Activated CD4-positive, alpha-beta T cell treated with anti-CD3 and anti-CD28 coated beads for 36 hours (primary cell): ENCODE measurements at regions of chr3 and their contacts with region 1.

Region 1: GRCh38 chr3:47865192-47865591 is 62.3 kb downstream of the DHX30 start:
- DNase-seq: no peak
- ATAC-seq: no peak
- H3K4me3 Mint-ChIP-seq: no peak overlapping the region
- H3K27ac Mint-ChIP-seq: no peak overlapping the region
- H3K4me1 Mint-ChIP-seq: no peaks in the 10 kb centered on the region
- H3K27me3 Mint-ChIP-seq: no peaks in the 10 kb centered on the region

Region 2: DNA sequence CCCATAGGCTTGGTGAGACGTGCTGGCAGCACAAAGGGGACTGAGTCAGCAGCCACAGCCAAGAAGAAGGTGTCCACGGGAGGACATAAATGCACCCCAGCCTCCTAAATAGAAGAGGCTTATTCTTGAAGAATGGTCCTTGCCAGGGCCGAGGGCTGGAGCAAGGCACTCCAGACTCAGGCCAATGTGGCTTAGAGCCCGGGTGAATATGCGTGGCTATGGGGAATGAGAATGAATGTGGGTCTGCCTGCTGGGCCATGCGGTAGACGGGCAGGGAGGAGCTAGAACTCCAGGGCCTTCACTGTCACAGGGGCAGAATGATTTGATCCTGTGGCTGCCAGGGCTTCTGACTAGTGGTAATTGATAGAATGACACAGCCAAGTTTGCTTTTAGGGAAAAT is 28.2 kb before region 1 on chr3:
- CTCF ChIA-PET with region 1: interaction called, 3 read pairs
- POLR2A ChIA-PET with region 1: interaction called, 11 read pairs
- intact Hi-C with region 1: no loop called
- DNase-seq: no peak
- ATAC-seq: no peak
- H3K4me3 Mint-ChIP-seq: no peak overlapping the region
- H3K27ac Mint-ChIP-seq: no peak overlapping the region
- H3K4me1 Mint-ChIP-seq: no peaks in the 10 kb centered on the region
- H3K27me3 Mint-ChIP-seq: no peaks in the 10 kb centered on the region